ENCODE measurements at regions of chr11 and their contacts with region 1.

Region 1: GRCh38 chr11:81219661-81220060 is 1514.0 kb downstream of the FAM181B start:
- DNase-seq: no peak
- H3K4me3 ChIP-seq: no peak overlapping the region
- H3K27ac ChIP-seq: no peak overlapping the region
- H3K4me1 ChIP-seq: no peaks in the 10 kb centered on the region
- H3K27me3 ChIP-seq: no peaks in the 10 kb centered on the region
- CTCF ChIP-seq: no peak
- POLR2A ChIP-seq: no peak

Region 2: DNA sequence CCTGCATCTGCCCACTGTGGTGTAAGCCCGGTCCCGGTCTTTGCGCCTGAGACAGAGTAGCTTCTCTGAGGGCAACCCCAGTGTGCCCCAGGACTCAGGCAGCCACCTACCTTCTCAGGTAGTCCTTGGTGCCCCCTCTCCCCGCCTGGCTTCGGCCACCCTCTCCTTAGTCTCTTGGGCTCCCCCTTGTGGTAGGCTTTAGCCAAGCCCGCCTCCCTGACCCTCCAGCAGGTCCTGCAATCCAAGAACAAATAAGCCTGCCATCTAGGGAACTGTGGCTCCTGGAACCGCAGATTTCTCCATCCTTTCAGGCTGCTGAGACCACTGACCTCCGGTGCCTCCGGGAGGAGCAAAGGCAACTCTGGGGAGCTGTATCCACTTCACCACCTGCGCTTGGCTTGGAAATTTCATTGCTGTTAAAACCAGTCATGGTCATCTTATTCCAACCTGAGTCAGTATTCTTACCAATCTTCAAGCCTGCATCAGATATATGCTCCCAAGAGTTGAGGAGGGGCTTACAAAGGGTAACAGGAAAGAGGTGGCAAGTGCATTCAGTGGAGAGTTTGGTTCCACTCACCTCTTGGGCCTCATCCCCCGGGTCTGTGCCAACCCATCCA is 1726.0 kb before region 1 on chr11:
- intact Hi-C with region 1: loop called (anchors 5 kb)
- DNase-seq: no peak
- H3K4me3 ChIP-seq: no peak overlapping the region
- H3K27ac ChIP-seq: no peak overlapping the region
- H3K4me1 ChIP-seq: no peaks in the 10 kb centered on the region
- H3K27me3 ChIP-seq: no peaks in the 10 kb centered on the region
- CTCF ChIP-seq: peak; percentile 16 to 76 (median 54)
- POLR2A ChIP-seq: no peak

Measured in vagina (tissue), 2 donors.